Psoas muscle (tissue), 8 donors: ENCODE measurements at regions of chr10 and their contacts with region 1.

Region 1: GRCh38 chr10:3239066-3239919 is 66.7 kb upstream of the PITRM1 start:
- DNase-seq: peak; percentile 72 to 83
- ATAC-seq: peak; percentile 84 to 97 (median 88)
- H3K4me3 ChIP-seq: peak overlapping the region; percentile 34
- H3K27ac ChIP-seq: peak overlapping the region; percentile 58
- H3K4me1 ChIP-seq: no peaks in the 10 kb centered on the region
- H3K27me3 ChIP-seq: peaks cover 0 to 4% (median 0%) of the 10 kb centered on the region in 3 donors
- CTCF ChIP-seq: peak; percentile 93

Region 2: DNA sequence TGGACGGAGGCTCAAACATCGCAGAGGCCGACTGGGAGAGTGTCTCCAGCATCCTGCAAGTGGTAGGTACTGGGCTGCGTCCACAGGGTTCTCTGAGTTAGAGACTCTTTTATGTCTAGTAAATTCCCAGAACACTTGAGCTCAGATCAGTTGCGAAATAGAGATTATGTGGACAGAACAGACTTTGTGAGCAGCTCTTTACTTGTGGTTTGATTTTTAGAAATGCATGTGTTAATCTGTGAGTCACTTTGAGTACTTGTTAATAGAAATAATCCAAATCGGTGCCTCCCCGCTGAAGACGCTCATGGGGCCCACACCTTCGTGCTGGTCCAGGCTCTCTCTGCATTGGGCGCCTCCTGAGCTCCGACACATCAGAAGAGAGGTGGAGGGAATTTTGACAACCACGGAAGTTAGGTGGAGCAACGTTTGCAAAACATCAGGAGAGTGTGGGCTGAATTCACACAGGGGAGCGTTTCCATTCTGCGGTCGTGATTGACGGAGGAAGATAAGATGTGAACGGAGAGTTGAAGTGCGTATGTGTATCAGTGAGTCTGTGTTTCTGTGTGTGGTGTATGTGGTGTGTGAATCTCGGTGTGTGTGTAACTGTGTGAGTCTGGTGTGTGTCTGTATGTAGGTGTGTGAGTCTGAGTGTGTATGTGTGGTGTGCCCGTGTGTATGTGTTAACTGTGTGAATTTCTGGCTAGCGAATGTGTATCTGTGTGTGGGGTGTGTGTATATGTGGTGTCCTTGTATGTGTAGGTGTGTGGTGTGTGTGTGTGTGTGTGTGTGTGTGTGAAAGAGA is 139.8 kb before region 1 on chr10:
- intact Hi-C with region 1: no loop called
- DNase-seq: no peak
- ATAC-seq: no peak
- H3K4me3 ChIP-seq: no peak overlapping the region
- H3K27ac ChIP-seq: no peak overlapping the region
- H3K4me1 ChIP-seq: no peaks in the 10 kb centered on the region
- H3K27me3 ChIP-seq: no peaks in the 10 kb centered on the region
- CTCF ChIP-seq: no peak

Region 3: DNA sequence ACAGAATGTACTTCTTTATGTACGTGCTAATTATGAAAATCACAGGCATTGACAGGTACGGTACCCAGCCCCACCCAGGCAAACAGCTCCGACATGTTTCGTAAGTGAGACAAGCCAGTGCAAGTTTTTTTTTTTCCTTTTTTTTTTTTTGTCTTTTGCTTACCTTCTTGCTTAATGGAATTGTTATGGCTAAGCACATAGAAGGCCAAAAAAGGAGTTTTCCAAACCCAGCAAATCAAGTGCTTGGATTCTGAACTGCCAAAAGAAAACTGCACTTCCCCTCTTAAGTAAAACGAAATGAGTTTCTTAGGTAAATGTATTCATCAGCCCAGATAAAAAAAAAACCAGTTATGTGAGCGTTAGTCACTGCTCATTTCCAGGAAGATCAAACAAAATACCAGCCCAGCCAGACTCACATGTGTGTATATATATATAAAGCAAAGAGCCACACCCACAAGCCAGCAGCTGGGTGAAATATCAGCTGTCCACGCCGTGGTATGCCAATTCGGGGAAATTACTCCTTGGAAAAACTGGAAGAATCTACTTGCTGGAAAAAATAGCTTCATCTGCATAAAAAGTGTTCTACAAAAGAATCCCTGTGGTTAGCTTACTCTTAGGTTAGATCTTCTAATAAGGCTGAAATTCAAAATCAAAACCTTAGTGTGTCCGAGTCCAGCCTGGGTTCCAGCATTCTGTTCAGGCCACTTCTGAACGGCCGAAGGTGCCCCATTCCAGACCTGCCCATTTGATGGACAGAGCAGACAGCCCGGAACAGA is 537.7 kb after region 1 on chr10:
- intact Hi-C with region 1: loop called (anchors 5 to 10 kb)
- DNase-seq: peak in 1 of 2 donors; percentile 40
- ATAC-seq: peak; percentile 24 to 52 (median 36)
- H3K4me3 ChIP-seq: peak overlapping the region; percentile 95
- H3K27ac ChIP-seq: peak overlapping the region; percentile 100
- H3K4me1 ChIP-seq: peaks cover 68% of the 10 kb centered on the region
- H3K27me3 ChIP-seq: no peaks in the 10 kb centered on the region
- CTCF ChIP-seq: no peak

Region 4: GRCh38 chr10:3785257-3785850 is 546.1 kb after region 1 on chr10:
- intact Hi-C with region 1: loop called in 1 of 2 experiments (anchors 5 kb)
- DNase-seq: peak; percentile 99 to 100
- ATAC-seq: peak; percentile 69 to 84 (median 78)
- H3K4me3 ChIP-seq: peak overlapping the region; percentile 95
- H3K27ac ChIP-seq: peak overlapping the region; percentile 100
- H3K4me1 ChIP-seq: peaks cover 10% of the 10 kb centered on the region
- H3K27me3 ChIP-seq: no peaks in the 10 kb centered on the region
- CTCF ChIP-seq: no peak